Left ventricle myocardium inferior (tissue), 1 donor: ENCODE measurements at regions of chr6 and their contacts with region 1.

Region 1: GRCh38 chr6:52233975-52234823 is 10.1 kb downstream of the IL17F start:
- DNase-seq: no peak
- H3K4me3 ChIP-seq: no peak overlapping the region
- H3K27ac ChIP-seq: no peak overlapping the region
- H3K4me1 ChIP-seq: no peaks in the 10 kb centered on the region
- H3K27me3 ChIP-seq: peaks cover 21% of the 10 kb centered on the region
- CTCF ChIP-seq: peak; percentile 60

Region 2: DNA sequence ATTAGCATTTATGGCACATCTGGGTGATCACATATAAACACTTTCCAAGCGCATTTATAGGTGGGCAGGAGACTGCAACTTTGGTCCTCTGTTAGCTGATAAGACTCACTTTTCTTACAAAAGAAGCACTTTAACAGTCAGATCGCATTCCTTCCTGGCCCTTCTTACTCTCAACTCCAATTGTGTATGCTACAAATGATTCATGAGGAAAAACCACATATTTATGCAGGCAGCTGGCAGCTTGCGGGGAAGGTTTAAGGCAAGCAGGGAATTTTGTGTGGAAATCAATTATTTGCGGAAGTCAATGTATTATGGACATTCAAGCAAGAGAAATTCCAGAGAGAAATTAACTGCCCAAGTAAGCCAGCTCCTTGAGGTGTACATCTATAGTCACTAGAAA is 340.8 kb before region 1 on chr6:
- intact Hi-C with region 1: no loop called
- DNase-seq: no peak
- H3K4me3 ChIP-seq: no peak overlapping the region
- H3K27ac ChIP-seq: no peak overlapping the region
- H3K4me1 ChIP-seq: no peaks in the 10 kb centered on the region
- H3K27me3 ChIP-seq: no peaks in the 10 kb centered on the region
- CTCF ChIP-seq: no peak

Region 3: GRCh38 chr6:52162940-52163908 is 71.0 kb before region 1 on chr6:
- intact Hi-C with region 1: loop called (anchors 10 kb)
- DNase-seq: no peak
- H3K4me3 ChIP-seq: no peak overlapping the region
- H3K27ac ChIP-seq: no peak overlapping the region
- H3K4me1 ChIP-seq: no peaks in the 10 kb centered on the region
- H3K27me3 ChIP-seq: no peaks in the 10 kb centered on the region
- CTCF ChIP-seq: peak; percentile 62